ENCODE measurements at regions of chr3 and their contacts with region 1.

Region 1: DNA sequence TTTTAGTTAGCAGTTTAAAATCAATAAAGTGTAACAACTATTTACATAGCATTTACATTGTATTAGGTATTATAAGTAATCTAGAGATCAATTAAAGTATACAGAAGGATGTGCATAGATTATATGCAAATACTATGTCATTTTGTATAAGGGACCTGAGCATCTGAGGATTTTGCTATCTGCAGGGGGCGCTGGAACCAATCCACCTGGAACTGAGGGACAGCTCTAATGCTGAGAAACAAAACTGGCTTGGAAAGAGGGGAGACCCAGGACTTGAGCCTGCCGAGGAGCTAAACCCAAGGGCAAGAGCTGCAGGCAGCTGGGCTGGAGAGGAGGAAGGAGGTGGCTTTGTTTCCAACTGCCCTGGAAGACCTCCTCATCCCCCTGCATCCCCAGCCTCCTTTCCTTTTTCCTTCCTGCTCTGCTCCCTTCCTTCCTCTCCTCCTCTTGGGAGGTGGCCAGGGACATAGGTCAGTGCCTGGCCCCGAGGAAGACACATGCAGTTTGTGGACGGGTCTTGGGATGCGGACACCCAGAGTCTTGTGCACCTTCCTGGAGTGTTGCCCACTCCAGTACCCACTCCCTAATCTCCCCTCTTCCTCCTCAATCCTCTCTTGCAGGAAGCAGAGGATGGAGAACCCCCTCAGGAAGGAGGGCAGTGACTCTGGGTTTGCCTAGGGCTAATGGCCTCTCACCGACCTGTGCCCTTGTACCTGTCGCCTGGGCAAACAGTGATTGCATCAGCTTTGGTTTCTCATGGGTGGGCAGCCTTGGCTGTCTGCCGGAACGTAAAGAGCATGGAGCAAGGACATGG is 828 bp upstream of the RTP3 start:
- DNase-seq: peak; percentile 71
- ATAC-seq: peak; percentile 53
- H3K4me3 Mint-ChIP-seq: no peak overlapping the region
- H3K27ac Mint-ChIP-seq: no peak overlapping the region
- H3K4me1 Mint-ChIP-seq: peaks cover 9% of the 10 kb centered on the region
- H3K27me3 Mint-ChIP-seq: no peaks in the 10 kb centered on the region

Region 2: GRCh38 chr3:46538803-46539442 is 42.0 kb after region 1 on chr3:
- CTCF ChIA-PET with region 1: interaction called, 3 read pairs
- POLR2A ChIA-PET with region 1: no interaction called
- intact Hi-C with region 1: loop called in 1 of 2 experiments (anchors 5 kb)
- DNase-seq: peak; percentile 86
- ATAC-seq: peak; percentile 89
- H3K4me3 Mint-ChIP-seq: peak overlapping the region; percentile 54
- H3K27ac Mint-ChIP-seq: peak overlapping the region; percentile 83
- H3K4me1 Mint-ChIP-seq: peaks cover 60% of the 10 kb centered on the region
- H3K27me3 Mint-ChIP-seq: no peaks in the 10 kb centered on the region

Region 3: DNA sequence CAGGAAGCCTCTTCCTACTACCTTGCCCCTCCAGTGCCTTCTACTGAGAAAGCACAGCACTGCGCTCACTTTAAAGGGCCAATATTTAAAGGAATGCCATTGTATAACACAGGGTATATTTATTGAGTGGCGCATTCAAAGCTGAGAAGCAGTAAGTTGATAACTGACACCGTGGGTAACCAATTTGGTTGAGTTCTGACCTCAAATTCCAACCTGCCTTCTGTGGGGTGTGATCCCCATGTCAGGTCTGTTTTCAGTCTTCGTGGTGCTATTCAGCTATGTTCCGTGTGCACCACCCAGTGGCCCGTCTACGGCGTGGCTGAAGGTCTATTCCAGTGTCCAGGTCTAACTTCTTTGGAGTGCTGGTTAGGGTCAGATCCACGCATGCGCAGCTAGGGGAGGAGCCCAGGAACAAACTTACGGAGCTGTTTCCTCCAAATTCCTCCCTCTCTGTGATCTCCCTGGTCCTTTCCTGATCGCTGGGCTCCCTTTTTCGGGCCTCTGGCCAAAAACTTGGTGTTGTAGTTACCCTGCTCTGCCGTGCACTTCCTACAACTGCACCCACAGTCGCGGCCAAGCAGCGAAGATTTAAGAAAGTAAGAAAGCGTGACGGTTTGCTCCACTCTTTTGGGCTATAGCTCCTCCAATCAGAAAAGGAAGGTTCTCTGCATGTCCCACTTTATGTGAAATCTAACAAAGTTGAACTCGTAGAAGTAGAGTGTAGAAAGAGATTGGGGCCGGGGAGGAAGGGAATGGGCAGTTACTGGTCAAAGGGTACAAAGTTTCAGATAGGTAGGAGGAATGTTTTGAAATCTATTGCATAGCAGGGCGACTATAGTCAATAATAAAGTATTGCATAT is 61.5 kb after region 1 on chr3:
- CTCF ChIA-PET with region 1: interaction called, 9 read pairs
- POLR2A ChIA-PET with region 1: no interaction called
- intact Hi-C with region 1: loop called (anchors 1 to 2 kb)
- DNase-seq: peak; percentile 81
- ATAC-seq: peak; percentile 94
- H3K4me3 Mint-ChIP-seq: peak overlapping the region; percentile 66
- H3K27ac Mint-ChIP-seq: no peak overlapping the region
- H3K4me1 Mint-ChIP-seq: peaks cover 9% of the 10 kb centered on the region
- H3K27me3 Mint-ChIP-seq: peaks cover 2% of the 10 kb centered on the region

Region 4: DNA sequence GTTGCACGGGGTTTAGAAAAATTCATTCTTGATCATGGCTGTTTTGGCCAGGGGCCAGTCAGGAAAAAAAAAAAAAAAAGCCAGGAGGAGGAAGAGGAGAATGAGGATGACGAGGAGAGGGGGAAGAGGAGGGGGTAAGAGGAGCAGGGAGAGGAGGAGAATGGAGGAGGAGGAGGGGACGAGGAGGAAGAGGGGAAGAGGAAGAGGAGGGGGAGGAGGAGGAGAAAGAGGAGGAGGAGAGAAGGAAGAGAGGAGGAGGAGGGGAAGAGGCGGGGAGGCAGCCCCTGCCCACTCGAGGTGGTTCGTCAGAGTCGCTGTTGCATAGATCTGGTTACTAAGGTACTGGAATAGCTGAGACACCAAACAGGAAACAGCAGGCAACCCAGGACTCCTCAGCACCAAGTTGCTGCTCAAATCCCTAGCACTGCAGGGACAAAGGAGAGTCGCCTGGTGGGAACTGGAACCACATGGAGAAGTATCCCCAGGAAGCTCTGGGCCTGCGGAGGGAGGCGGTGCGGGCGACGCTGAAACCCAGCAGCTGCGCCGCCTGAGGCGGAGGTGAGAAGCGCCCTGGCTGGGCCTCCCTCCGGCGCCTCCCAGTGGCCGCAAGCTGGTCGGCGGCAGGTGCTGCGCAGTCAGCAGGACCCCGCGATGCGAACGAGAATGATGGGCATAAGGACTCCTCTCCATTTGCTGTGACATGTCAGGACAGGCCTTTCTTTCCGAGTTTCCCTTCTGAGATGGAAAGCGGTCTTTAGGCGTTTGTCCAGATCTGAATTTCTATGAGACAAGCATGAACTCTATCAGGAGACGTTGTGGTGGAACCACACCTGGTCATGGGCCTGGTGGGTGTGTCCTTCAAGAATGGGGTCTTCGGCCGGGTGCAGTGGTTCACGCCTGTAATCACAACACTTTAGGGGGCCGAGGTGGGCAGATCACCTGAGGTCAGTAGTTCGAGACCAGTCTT is 132.9 kb after region 1 on chr3:
- CTCF ChIA-PET with region 1: interaction called, 23 read pairs
- POLR2A ChIA-PET with region 1: no interaction called
- intact Hi-C with region 1: no loop called
- DNase-seq: peak; percentile 89
- ATAC-seq: peak; percentile 99
- H3K4me3 Mint-ChIP-seq: peak overlapping the region; percentile 53
- H3K27ac Mint-ChIP-seq: peak overlapping the region; percentile 66
- H3K4me1 Mint-ChIP-seq: peaks cover 17% of the 10 kb centered on the region
- H3K27me3 Mint-ChIP-seq: no peaks in the 10 kb centered on the region

Measured in activated CD4-positive, alpha-beta T cell treated with anti-CD3 and anti-CD28 coated beads for 36 hours (primary cell).